ENCODE measurements at regions of chr17 and their contacts with region 1.

Region 1: GRCh38 chr17:16453493-16453851 is 38.1 kb downstream of the TRPV2 start:
- DNase-seq: no peak
- H3K4me3 ChIP-seq: no peak overlapping the region
- H3K4me3 Mint-ChIP-seq: peak overlapping the region in 1 of 7 donors; percentile 21
- H3K27ac ChIP-seq: no peak overlapping the region
- H3K27ac Mint-ChIP-seq: peak overlapping the region in 5 of 8 donors; percentile 8 to 79 (median 51)
- H3K4me1 ChIP-seq: no peaks in the 10 kb centered on the region
- H3K4me1 Mint-ChIP-seq: peaks cover 6 to 10% (median 7%) of the 10 kb centered on the region in 3 donors
- H3K27me3 ChIP-seq: no peaks in the 10 kb centered on the region
- H3K27me3 Mint-ChIP-seq: no peaks in the 10 kb centered on the region

Region 2: GRCh38 chr17:16353317-16354174 is 99.9 kb before region 1 on chr17 and contains the start of gene CENPV:
- CTCF ChIA-PET with region 1: no interaction called
- POLR2A ChIA-PET with region 1: no interaction called
- DNase-seq: peak; percentile 56 to 79 (median 67)
- H3K4me3 ChIP-seq: peak within 1 kb of the TSS; percentile 69
- H3K4me3 Mint-ChIP-seq: peak within 1 kb of the TSS; percentile 93 to 98 (median 94)
- H3K27ac ChIP-seq: peak within 1 kb of the TSS; percentile 31
- H3K27ac Mint-ChIP-seq: peak within 1 kb of the TSS; percentile 57 to 96 (median 80)
- H3K4me1 ChIP-seq: peaks cover 13% of the 10 kb centered on the region
- H3K4me1 Mint-ChIP-seq: peaks cover 17 to 21% (median 20%) of the 10 kb centered on the region in 3 donors
- H3K27me3 ChIP-seq: no peaks in the 10 kb centered on the region
- H3K27me3 Mint-ChIP-seq: peaks cover 0 to 2% of the 10 kb centered on the region in 2 donors
- total RNA-seq, gene CENPV: 53.4 to 56.4 TPM

Region 3: GRCh38 chr17:16438557-16439302 is 14.7 kb before region 1 on chr17:
- CTCF ChIA-PET with region 1: interaction called, 42 read pairs
- POLR2A ChIA-PET with region 1: interaction called, 9 read pairs
- DNase-seq: peak; percentile 91 to 97 (median 97)
- H3K4me3 ChIP-seq: peak overlapping the region; percentile 74
- H3K4me3 Mint-ChIP-seq: peak overlapping the region; percentile 96 to 100 (median 99)
- H3K27ac ChIP-seq: peak overlapping the region; percentile 92
- H3K27ac Mint-ChIP-seq: peak overlapping the region; percentile 78 to 100 (median 99)
- H3K4me1 ChIP-seq: peaks cover 35% of the 10 kb centered on the region
- H3K4me1 Mint-ChIP-seq: peaks cover 55 to 61% (median 59%) of the 10 kb centered on the region in 3 donors
- H3K27me3 ChIP-seq: no peaks in the 10 kb centered on the region
- H3K27me3 Mint-ChIP-seq: no peaks in the 10 kb centered on the region

Measured in CD8-positive, alpha-beta memory T cell (primary cell).